Activated T-helper 1 cell treated with anti-CD3 and anti-CD28 coated beads, Interleukin-12 subunit alpha, Interleukin-12 subunit beta, Interleukin-2, Interleukin-4 antibody, amounts not matched to agents 30 ng/mL and 10 ng/mL and 1 ng/mL, durations not matched to agents 14 hours and 24 hours and 36 hours (primary cell): ENCODE measurements at regions of chr17 and their contacts with region 1.

Region 1: GRCh38 chr17:61002316-61002736 is 324.7 kb downstream of the BCAS3 start:
- DNase-seq: no peak
- H3K4me3 Mint-ChIP-seq: no peak overlapping the region
- H3K27ac Mint-ChIP-seq: no peak overlapping the region
- H3K4me1 Mint-ChIP-seq: peaks cover 4% of the 10 kb centered on the region
- H3K27me3 Mint-ChIP-seq: peaks cover 3% of the 10 kb centered on the region

Region 2: DNA sequence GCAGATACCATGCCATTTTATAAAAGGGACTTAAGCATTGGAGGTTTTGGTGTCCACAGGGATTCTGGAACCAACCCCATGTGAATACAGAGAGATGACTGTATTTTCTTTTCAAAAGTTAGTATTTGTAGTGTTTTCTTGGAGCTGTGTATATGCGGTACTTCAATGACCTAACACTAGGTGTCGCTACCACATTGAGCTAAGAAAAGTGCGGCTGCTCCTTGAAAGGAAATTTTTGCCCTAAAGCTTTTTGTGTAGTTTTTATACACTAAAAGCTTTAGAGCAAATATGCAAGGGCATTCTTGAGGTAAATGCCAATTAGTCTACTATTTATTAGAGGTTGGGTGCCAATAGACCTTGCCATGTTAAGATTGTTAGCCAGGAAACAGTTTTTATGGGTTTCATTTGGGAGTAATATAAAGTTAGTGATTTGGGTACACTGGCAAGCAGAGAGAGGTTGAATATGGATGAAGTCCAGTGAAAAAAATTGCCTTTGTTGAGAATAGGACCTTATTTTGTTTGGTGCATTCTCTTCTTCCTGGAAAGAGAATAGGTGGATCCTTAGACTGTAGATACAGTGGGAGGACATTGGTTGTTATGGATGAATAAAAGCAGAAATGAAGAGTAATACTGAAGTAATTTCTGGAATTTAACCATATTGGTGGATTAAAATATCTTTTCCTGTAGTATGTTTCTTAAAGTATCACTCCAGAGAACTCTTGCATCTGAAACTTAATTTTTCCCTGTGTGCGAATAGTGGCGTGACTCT is 281.4 kb before region 1 on chr17:
- intact Hi-C with region 1: loop called (anchors 2 kb)
- DNase-seq: peak; percentile 21
- H3K4me3 Mint-ChIP-seq: no peak overlapping the region
- H3K27ac Mint-ChIP-seq: no peak overlapping the region
- H3K4me1 Mint-ChIP-seq: no peaks in the 10 kb centered on the region
- H3K27me3 Mint-ChIP-seq: no peaks in the 10 kb centered on the region

Region 3: DNA sequence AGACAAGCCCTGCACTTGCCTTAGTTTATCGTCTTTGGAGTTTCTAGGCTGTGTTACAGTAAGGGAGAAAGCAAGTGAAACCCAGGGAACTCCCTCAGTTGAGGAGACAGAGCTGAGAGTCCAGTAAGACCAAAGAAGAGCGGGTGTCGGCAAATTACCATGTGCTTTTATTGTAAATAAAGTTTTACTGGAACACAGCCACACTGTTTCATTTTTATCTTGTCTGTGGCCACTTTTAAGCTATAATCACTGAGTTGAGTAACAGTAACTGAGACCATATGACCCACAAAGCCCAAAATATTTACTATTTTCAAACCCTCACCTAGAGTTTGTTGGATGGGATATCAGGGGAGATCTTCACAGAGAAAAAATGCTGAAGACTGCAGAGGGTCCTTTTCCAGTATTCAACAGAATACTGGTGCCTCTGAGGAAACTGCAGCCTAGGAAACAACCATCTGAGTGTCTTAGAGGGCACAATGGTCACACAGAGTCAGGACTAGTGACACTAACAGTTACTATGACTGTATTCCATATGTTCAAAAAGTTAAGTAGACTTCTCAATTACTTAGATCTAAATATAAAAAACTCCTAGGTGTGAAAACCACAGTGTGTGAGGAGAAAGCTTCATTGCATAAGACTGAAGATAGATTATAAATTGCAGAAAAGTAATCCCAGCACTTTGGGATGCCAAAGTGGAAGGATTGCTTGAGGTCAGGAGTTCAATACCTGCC is 46.2 kb after region 1 on chr17:
- intact Hi-C with region 1: no loop called
- DNase-seq: no peak
- H3K4me3 Mint-ChIP-seq: no peak overlapping the region
- H3K27ac Mint-ChIP-seq: no peak overlapping the region
- H3K4me1 Mint-ChIP-seq: peaks cover 9% of the 10 kb centered on the region
- H3K27me3 Mint-ChIP-seq: no peaks in the 10 kb centered on the region

Region 4: DNA sequence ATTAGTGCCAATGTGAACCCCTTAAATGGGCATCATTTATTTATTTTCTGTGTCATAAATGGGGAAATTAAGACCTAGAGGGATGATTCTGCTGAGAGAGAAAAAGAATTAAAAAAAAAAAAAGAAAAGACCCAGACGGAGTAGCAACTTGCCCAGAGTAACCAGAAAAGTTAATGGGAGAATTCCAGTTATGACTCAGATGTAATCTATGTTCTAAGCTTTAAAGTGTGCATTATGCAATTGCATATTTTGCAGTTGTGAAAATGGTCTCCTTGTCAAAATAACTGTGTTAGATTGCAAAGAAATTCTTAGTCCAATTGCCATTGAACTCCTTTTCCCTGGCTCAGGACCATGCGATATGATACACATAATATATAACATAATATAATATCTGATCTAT is 358.8 kb after region 1 on chr17:
- intact Hi-C with region 1: loop called (anchors 1 kb)
- DNase-seq: no peak
- H3K4me3 Mint-ChIP-seq: no peak overlapping the region
- H3K27ac Mint-ChIP-seq: no peak overlapping the region
- H3K4me1 Mint-ChIP-seq: no peaks in the 10 kb centered on the region
- H3K27me3 Mint-ChIP-seq: no peaks in the 10 kb centered on the region

Region 5: DNA sequence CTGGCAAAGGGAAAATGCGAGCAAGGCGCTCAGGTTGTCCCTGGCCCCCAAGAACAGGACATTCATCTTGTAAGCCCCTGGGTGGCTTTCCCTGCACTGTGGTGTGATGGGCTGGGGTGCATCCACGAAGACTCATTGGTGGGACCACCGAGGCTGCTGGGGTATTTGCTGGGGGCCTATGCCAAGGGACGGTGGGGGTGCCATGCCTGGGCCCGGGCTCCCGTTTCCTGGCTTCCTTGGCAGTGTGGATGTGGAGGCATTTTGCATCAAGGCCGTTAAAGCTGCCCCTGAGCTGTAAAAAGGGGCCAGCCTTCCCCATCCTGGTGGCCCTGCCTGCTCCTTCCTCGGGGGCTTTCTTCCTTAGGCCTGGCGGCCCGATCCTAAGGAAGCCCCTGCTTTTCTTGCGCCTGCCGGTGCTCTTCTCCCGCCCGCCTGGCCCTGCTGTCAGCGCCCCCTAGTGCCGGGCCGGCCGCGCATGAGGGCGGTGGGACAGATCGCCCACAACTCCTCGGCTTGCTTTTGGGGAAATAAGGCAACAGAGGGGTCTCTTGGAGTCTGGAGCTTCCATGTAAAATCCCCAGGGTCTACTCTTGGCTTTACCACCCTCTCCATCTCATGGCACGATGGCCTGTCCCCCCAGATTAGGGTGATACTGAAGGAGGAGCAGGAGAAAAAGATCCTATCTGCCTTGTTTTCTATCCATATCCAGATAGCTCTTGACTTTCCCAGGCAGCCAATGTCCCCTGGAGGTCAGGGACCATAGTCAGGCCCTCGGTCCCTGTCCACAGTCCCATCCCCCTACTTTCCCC is 387.5 kb after region 1 on chr17:
- intact Hi-C with region 1: loop called (anchors 1 kb)
- DNase-seq: no peak
- H3K4me3 Mint-ChIP-seq: no peak overlapping the region
- H3K27ac Mint-ChIP-seq: no peak overlapping the region
- H3K4me1 Mint-ChIP-seq: no peaks in the 10 kb centered on the region
- H3K27me3 Mint-ChIP-seq: peaks cover 24% of the 10 kb centered on the region

Region 6: DNA sequence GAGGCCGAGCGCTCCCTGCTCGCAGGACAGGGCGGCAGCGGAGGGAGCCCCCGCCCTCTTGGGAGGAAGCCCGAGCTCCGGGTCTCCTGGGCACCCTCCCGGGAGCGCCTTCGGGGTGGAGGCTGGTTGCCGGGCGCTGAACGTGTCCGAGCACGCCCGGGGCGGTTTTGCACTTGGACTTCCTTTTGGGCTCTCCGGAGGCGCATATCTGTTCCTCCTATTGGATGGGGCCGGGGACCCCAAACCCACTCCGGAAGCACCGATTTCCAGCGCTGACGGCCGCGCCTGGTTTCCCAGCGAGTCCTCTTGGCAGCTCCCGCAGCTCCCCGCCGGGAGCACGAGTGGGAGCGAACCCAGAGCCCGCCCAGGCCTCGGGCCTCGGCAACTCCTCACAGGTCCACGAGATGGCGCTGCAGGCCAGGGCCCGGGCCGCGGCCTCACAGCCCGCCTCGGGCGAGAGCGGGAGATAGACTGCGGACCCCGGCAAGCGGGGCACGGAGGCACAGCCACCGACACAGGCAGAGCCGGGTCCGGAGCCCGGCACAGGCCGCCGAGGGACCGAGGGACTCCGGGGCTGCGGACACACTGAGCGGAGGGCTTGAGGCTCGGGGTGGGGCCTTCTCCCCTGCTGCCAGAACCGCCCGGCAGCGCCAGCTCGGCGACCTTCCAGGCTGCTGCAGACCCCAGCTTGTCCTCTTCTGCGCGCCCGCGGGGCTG is 410.0 kb after region 1 on chr17:
- intact Hi-C with region 1: loop called (anchors 5 kb)
- DNase-seq: peak; percentile 69
- H3K4me3 Mint-ChIP-seq: no peak overlapping the region
- H3K27ac Mint-ChIP-seq: no peak overlapping the region
- H3K4me1 Mint-ChIP-seq: peaks cover 7% of the 10 kb centered on the region
- H3K27me3 Mint-ChIP-seq: peaks cover 51% of the 10 kb centered on the region

Region 7: GRCh38 chr17:61451538-61452300 is 449.4 kb after region 1 on chr17:
- intact Hi-C with region 1: loop called (anchors 10 kb)
- DNase-seq: no peak
- H3K4me3 Mint-ChIP-seq: no peak overlapping the region
- H3K27ac Mint-ChIP-seq: no peak overlapping the region
- H3K4me1 Mint-ChIP-seq: peaks cover 6% of the 10 kb centered on the region
- H3K27me3 Mint-ChIP-seq: peaks cover 72% of the 10 kb centered on the region